ENCODE measurements at regions of chr13 and their contacts with region 1.

Region 1: DNA sequence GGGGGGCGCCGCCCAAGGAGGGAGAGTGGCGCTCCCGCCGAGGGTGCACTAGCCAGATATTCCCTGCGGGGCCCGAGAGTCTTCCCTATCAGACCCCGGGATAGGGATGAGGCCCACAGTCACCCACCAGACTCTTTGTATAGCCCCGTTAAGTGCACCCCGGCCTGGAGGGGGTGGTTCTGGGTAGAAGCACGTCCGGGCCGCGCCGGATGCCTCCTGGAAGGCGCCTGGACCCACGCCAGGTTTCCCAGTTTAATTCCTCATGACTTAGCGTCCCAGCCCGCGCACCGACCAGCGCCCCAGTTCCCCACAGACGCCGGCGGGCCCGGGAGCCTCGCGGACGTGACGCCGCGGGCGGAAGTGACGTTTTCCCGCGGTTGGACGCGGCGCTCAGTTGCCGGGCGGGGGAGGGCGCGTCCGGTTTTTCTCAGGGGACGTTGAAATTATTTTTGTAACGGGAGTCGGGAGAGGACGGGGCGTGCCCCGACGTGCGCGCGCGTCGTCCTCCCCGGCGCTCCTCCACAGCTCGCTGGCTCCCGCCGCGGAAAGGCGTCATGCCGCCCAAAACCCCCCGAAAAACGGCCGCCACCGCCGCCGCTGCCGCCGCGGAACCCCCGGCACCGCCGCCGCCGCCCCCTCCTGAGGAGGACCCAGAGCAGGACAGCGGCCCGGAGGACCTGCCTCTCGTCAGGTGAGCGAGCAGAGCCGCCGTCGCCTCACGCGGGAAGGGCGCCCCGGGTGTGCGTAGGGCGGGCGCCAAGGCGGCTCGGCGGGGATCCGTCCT is at the start of gene RB1:
- DNase-seq: peak; percentile 81 to 97 (median 90)
- ATAC-seq: peak; percentile 79
- H3K4me3 ChIP-seq: peak within 1 kb of the TSS; percentile 83 to 95
- H3K4me3 Mint-ChIP-seq: peak within 1 kb of the TSS; percentile 98
- H3K27ac ChIP-seq: peak within 1 kb of the TSS; percentile 97 to 99
- H3K27ac Mint-ChIP-seq: peak within 1 kb of the TSS; percentile 97
- H3K4me1 ChIP-seq: peaks cover 17% of the 10 kb centered on the region
- H3K4me1 Mint-ChIP-seq: peaks cover 39% of the 10 kb centered on the region
- H3K27me3 ChIP-seq: no peaks in the 10 kb centered on the region
- H3K27me3 Mint-ChIP-seq: no peaks in the 10 kb centered on the region
- CTCF ChIP-seq: no peak
- total RNA-seq, gene RB1: 11.5 to 12.5 TPM

Region 2: DNA sequence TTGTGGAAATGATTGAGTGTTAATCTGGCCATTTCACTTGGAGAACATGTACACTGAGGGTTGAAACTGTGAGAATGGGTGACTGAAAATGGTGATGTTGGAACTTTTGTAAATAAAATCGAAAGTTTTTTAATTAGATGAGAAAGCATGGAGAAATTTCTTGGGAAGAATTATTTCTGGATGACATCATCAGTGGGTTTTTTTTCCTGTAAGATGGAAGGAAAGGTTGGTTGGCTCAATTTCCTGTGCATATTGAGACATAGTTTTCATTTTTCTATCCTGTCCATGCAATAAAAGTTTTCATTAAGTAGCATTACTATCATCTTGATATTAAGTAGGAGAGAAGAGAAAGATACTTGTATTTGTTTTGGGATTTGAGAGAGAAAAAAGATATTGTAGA is 1286.1 kb before region 1 on chr13:
- CTCF ChIA-PET with region 1: no interaction called
- POLR2A ChIA-PET with region 1: no interaction called
- intact Hi-C with region 1: no loop called
- DNase-seq: no peak
- ATAC-seq: no peak
- H3K4me3 ChIP-seq: no peak overlapping the region
- H3K4me3 Mint-ChIP-seq: no peak overlapping the region
- H3K27ac ChIP-seq: no peak overlapping the region
- H3K27ac Mint-ChIP-seq: no peak overlapping the region
- H3K4me1 ChIP-seq: no peaks in the 10 kb centered on the region
- H3K4me1 Mint-ChIP-seq: no peaks in the 10 kb centered on the region
- H3K27me3 ChIP-seq: no peaks in the 10 kb centered on the region
- H3K27me3 Mint-ChIP-seq: no peaks in the 10 kb centered on the region
- CTCF ChIP-seq: no peak

Region 3: DNA sequence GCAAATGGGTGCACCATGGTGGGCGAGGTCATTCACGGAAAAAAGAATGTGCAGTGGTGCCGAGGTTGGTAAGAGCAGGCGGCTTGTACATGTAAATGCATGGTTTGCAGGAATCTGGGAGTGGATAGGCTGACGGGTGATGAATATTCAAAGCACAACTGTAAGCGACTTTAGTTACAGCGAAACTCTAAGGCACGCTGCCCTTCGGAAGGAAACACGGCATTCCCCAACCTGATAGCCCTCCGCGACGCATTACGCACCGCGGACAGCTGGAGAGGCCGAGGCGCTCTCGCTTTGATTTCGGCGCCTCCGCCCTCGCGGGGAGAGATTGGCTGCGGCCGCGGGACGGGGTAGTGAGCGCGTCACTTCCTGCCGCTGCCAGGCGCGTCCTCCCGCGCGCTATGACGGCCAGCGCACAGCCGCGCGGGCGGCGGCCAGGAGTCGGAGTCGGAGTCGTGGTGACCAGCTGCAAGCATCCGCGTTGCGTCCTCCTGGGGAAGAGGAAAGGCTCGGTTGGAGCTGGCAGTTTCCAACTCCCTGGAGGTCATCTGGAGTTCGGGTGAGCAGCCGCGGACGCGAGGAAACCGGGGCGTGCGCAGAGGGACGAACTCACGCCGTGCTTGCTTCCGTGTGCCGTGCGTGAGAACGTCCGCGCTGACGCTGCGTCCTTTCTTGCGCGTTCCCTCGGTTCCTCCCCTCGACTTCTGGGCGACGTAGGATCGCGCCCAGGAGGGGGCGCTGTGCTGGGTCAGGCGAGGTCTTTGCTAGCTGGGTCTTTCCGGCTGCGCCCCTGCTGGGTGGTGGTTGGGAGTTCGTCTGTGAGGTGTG is 266.0 kb before region 1 on chr13 and contains the start of gene NUDT15:
- CTCF ChIA-PET with region 1: no interaction called
- POLR2A ChIA-PET with region 1: interaction called, 4 read pairs
- intact Hi-C with region 1: loop called (anchors 1 kb)
- DNase-seq: peak; percentile 88 to 99 (median 97)
- ATAC-seq: peak; percentile 90
- H3K4me3 ChIP-seq: peak within 1 kb of the TSS; percentile 81 to 96
- H3K4me3 Mint-ChIP-seq: peak within 1 kb of the TSS; percentile 97
- H3K27ac ChIP-seq: peak within 1 kb of the TSS; percentile 99
- H3K27ac Mint-ChIP-seq: peak within 1 kb of the TSS; percentile 98
- H3K4me1 ChIP-seq: peaks cover 20% of the 10 kb centered on the region
- H3K4me1 Mint-ChIP-seq: peaks cover 32% of the 10 kb centered on the region
- H3K27me3 ChIP-seq: no peaks in the 10 kb centered on the region
- H3K27me3 Mint-ChIP-seq: no peaks in the 10 kb centered on the region
- CTCF ChIP-seq: peak; percentile 99
- total RNA-seq, gene NUDT15: 23.8 to 24.9 TPM

Region 4: GRCh38 chr13:48155848-48156247 is 147.7 kb before region 1 on chr13:
- CTCF ChIA-PET with region 1: no interaction called
- POLR2A ChIA-PET with region 1: interaction called, 4 read pairs
- intact Hi-C with region 1: loop called (anchors 1 to 10 kb)
- DNase-seq: peak in 6 of 9 experiments; percentile 14 to 90 (median 46)
- ATAC-seq: peak; percentile 71
- H3K4me3 ChIP-seq: peak overlapping the region in 1 of 2 experiments; percentile 37
- H3K4me3 Mint-ChIP-seq: peak overlapping the region; percentile 44
- H3K27ac ChIP-seq: peak overlapping the region; percentile 61 to 89
- H3K27ac Mint-ChIP-seq: peak overlapping the region; percentile 96
- H3K4me1 ChIP-seq: peaks cover 75% of the 10 kb centered on the region
- H3K4me1 Mint-ChIP-seq: peaks cover 81% of the 10 kb centered on the region
- H3K27me3 ChIP-seq: no peaks in the 10 kb centered on the region
- H3K27me3 Mint-ChIP-seq: no peaks in the 10 kb centered on the region
- CTCF ChIP-seq: no peak

Region 5: DNA sequence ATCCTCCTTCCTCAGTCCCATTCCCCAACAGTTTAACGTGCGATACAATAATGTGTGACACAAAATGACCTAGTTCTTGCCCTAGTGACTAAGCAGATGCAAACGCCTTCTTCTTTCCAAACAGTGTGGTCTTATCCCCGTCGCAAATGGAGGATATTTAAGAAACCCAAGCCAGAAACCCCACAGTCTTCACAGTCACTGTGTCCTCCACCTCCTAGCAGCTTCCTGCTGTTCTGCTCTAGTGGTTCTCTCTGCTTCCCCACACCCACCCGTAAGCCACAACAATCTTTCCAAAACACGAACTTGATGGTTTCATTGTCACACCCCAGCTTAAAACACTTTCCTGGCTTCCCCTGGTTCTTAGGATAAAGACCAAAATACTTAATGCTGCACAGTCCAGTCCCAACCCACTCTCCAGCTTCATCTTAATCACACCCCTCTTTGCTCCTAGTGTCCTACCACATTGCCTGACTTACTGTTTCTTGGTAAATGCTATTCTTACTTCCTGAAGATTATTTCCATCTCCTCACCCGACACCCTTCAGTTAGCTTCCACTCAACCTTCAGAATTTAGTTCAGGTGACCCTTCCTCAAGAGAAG is 38.2 kb before region 1 on chr13:
- CTCF ChIA-PET with region 1: no interaction called
- POLR2A ChIA-PET with region 1: no interaction called
- intact Hi-C with region 1: loop called in 1 of 2 experiments (anchors 5 kb)
- DNase-seq: peak in 3 of 9 experiments; percentile 10 to 33 (median 27)
- ATAC-seq: peak; percentile 59
- H3K4me3 ChIP-seq: no peak overlapping the region
- H3K4me3 Mint-ChIP-seq: peak overlapping the region; percentile 38
- H3K27ac ChIP-seq: peak overlapping the region in 1 of 2 experiments; percentile 54
- H3K27ac Mint-ChIP-seq: peak overlapping the region; percentile 90
- H3K4me1 ChIP-seq: peaks cover 28% of the 10 kb centered on the region
- H3K4me1 Mint-ChIP-seq: peaks cover 57% of the 10 kb centered on the region
- H3K27me3 ChIP-seq: no peaks in the 10 kb centered on the region
- H3K27me3 Mint-ChIP-seq: no peaks in the 10 kb centered on the region
- CTCF ChIP-seq: no peak

Region 6: GRCh38 chr13:48749699-48750473 is 446.3 kb after region 1 on chr13:
- CTCF ChIA-PET with region 1: no interaction called
- POLR2A ChIA-PET with region 1: no interaction called
- intact Hi-C with region 1: no loop called
- DNase-seq: peak in 8 of 9 experiments; percentile 15 to 63 (median 56)
- ATAC-seq: peak; percentile 89
- H3K4me3 ChIP-seq: no peak overlapping the region
- H3K4me3 Mint-ChIP-seq: no peak overlapping the region
- H3K27ac ChIP-seq: no peak overlapping the region
- H3K27ac Mint-ChIP-seq: no peak overlapping the region
- H3K4me1 ChIP-seq: no peaks in the 10 kb centered on the region
- H3K4me1 Mint-ChIP-seq: peaks cover 7% of the 10 kb centered on the region
- H3K27me3 ChIP-seq: no peaks in the 10 kb centered on the region
- H3K27me3 Mint-ChIP-seq: no peaks in the 10 kb centered on the region
- CTCF ChIP-seq: no peak

Region 7: DNA sequence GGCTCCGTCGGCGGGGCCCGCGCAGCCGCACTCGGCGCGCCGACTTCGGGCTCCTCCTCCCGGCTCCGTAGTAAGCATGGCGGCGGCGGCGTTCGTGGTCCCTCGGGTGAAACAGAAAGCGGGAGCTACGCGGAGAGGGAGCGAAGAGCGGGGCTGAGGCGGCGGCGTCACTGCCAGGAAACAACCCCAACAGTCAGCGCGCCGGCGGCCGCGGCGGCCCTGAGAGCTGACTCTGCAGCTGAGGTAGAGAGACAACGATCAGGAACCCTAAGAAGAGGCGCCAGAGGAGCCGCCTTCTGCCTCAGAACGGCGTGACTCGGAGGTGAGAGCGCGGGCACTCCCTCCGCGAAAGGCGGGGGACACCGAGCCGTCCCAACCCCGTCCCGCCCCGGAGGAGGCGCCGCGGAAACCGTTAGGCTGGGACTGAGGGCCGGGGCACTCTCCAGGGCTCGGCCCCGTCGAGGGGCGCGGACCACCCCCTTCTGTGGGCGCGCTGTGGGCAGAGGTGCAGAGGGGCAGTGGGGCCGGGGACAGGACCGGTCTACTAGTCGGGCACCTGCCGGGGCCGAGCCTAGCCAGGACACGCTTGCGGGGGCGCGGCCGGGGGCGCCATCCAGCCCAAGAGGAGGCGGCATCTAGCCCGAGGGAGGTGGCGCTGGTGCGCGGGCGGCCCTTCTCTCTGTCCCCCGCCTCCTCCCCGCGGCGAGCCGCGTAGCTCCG is 672.5 kb after region 1 on chr13 and contains the start of gene FNDC3A:
- CTCF ChIA-PET with region 1: no interaction called
- POLR2A ChIA-PET with region 1: no interaction called
- intact Hi-C with region 1: loop called (anchors 5 to 10 kb)
- DNase-seq: peak; percentile 70 to 93 (median 83)
- ATAC-seq: peak; percentile 70
- H3K4me3 ChIP-seq: peak within 1 kb of the TSS; percentile 79 to 80
- H3K4me3 Mint-ChIP-seq: peak within 1 kb of the TSS; percentile 97
- H3K27ac ChIP-seq: peak within 1 kb of the TSS; percentile 79 to 91
- H3K27ac Mint-ChIP-seq: peak within 1 kb of the TSS; percentile 99
- H3K4me1 ChIP-seq: peaks cover 33% of the 10 kb centered on the region
- H3K4me1 Mint-ChIP-seq: peaks cover 42% of the 10 kb centered on the region
- H3K27me3 ChIP-seq: no peaks in the 10 kb centered on the region
- H3K27me3 Mint-ChIP-seq: no peaks in the 10 kb centered on the region
- CTCF ChIP-seq: no peak
- total RNA-seq, gene FNDC3A: 27.0 to 27.7 TPM

Measured in CD8-positive, alpha-beta T cell (primary cell).